CD4-positive, alpha-beta T cell (primary cell): ENCODE measurements at regions of chr15 and their contacts with region 1.

Region 1: DNA sequence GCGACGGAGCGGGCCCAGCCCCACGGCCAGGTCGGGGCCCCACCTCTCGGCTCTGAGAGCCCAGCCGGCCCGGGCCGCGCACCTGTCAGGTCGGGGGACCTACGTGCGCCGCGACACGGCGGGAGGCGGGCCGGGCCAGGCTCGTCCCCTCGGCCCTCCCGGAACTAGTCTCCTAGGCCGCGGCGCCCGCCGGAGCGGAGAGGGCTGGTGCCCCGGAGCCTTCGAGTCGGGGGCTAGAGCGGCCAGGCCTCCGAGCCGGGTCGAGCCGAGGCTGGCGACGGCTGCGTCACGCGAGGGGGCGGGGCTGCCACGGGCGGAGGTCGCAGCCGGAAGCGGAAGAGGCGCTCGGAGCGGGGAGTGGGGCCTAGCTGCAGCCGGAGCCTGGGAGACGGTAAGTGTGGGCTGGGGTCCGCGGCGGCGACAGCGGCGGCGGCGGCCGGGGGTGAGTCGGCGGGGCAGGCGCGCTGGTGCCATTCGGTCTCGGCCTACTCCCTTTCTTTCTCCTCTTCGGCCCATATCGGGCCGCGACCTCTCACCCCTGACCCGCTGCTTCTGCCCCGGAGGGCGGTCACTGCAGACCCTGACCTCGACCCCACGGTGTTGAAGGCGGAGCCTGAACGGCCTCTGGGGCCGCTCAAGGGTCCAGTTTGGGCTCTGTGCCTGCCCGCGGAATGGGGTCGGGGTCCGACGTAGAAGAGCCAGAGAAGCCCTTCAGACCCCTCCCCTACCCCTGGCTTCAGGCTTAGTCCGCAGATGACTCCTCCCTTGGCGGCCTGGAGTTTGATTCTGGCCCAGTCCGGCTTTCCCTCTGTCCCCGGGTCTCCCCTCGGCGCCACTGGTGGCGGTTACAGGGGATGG is at the start of gene CLK3:
- DNase-seq: peak; percentile 92 to 99 (median 97)
- ATAC-seq: peak; percentile 70
- H3K4me3 ChIP-seq: peak within 1 kb of the TSS; percentile 100
- H3K4me3 Mint-ChIP-seq: peak within 1 kb of the TSS; percentile 94
- H3K27ac ChIP-seq: peak within 1 kb of the TSS; percentile 95 to 98
- H3K27ac Mint-ChIP-seq: peak within 1 kb of the TSS; percentile 99
- H3K4me1 ChIP-seq: peaks cover 63% of the 10 kb centered on the region
- H3K4me1 Mint-ChIP-seq: peaks cover 42% of the 10 kb centered on the region
- H3K27me3 ChIP-seq: no peaks in the 10 kb centered on the region
- H3K27me3 Mint-ChIP-seq: no peaks in the 10 kb centered on the region
- CTCF ChIP-seq: no peak
- total RNA-seq, gene CLK3: 275 to 293 TPM

Region 2: DNA sequence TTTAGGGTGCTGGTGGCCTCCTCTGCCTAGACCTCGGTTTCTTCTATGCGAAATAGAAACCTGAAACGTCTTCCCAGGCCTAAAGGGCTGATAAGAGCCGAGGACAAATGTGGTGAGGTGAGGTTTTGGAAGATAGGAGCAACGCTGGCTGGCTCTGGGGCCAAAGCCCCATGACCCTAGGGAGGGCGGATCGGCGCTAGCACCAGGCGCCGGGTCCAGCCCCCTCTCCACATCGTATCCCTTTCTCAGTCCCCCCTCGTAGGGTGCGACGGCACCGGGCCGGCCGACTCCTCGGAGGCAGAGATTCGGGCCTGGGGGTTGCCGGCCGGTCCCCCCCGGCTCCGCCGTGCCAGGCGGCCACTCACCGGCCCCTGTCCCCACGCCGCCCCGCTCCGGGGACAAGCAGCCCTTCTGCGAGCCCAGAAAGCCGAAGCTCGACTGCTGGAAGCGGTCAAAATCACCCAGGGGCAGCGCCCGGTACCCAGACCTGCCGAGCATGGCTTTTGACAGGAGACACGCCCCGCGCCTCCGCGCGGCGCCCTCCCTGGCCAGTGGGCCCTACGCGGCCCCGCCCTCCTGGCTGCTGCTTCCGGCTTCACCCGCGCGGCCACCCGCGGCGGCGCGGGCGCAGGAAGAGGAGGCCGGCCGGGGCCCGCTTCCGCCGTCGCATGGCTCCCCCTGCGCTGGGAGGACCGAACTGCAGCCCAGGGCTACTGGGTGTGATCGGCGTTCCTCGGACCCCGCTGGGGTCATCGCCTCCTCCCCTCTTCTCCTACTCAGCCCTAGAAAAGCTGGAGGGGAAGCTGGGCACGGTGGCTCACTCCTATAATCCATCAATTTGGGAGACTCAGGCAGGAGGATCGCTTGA is 623.8 kb before region 1 on chr15 and contains the start of gene STOML1:
- CTCF ChIA-PET with region 1: no interaction called
- POLR2A ChIA-PET with region 1: interaction called, 7 read pairs
- intact Hi-C with region 1: loop called (anchors 5 to 10 kb)
- DNase-seq: peak; percentile 85 to 98 (median 94)
- ATAC-seq: peak; percentile 74
- H3K4me3 ChIP-seq: peak within 1 kb of the TSS; percentile 71
- H3K4me3 Mint-ChIP-seq: peak within 1 kb of the TSS; percentile 82
- H3K27ac ChIP-seq: peak within 1 kb of the TSS in 1 of 2 donors; percentile 47
- H3K27ac Mint-ChIP-seq: peak within 1 kb of the TSS; percentile 85
- H3K4me1 ChIP-seq: peaks cover 48% of the 10 kb centered on the region
- H3K4me1 Mint-ChIP-seq: peaks cover 51% of the 10 kb centered on the region
- H3K27me3 ChIP-seq: no peaks in the 10 kb centered on the region
- H3K27me3 Mint-ChIP-seq: no peaks in the 10 kb centered on the region
- CTCF ChIP-seq: peak; percentile 83
- total RNA-seq, gene STOML1: 4.6 to 5.3 TPM

Region 3: GRCh38 chr15:74422650-74423430 is 192.9 kb before region 1 on chr15:
- CTCF ChIA-PET with region 1: no interaction called
- POLR2A ChIA-PET with region 1: no interaction called
- intact Hi-C with region 1: no loop called
- DNase-seq: no peak
- ATAC-seq: no peak
- H3K4me3 ChIP-seq: no peak overlapping the region
- H3K4me3 Mint-ChIP-seq: no peak overlapping the region
- H3K27ac ChIP-seq: no peak overlapping the region
- H3K27ac Mint-ChIP-seq: no peak overlapping the region
- H3K4me1 ChIP-seq: no peaks in the 10 kb centered on the region
- H3K4me1 Mint-ChIP-seq: no peaks in the 10 kb centered on the region
- H3K27me3 ChIP-seq: no peaks in the 10 kb centered on the region
- H3K27me3 Mint-ChIP-seq: no peaks in the 10 kb centered on the region
- CTCF ChIP-seq: no peak

Region 4: DNA sequence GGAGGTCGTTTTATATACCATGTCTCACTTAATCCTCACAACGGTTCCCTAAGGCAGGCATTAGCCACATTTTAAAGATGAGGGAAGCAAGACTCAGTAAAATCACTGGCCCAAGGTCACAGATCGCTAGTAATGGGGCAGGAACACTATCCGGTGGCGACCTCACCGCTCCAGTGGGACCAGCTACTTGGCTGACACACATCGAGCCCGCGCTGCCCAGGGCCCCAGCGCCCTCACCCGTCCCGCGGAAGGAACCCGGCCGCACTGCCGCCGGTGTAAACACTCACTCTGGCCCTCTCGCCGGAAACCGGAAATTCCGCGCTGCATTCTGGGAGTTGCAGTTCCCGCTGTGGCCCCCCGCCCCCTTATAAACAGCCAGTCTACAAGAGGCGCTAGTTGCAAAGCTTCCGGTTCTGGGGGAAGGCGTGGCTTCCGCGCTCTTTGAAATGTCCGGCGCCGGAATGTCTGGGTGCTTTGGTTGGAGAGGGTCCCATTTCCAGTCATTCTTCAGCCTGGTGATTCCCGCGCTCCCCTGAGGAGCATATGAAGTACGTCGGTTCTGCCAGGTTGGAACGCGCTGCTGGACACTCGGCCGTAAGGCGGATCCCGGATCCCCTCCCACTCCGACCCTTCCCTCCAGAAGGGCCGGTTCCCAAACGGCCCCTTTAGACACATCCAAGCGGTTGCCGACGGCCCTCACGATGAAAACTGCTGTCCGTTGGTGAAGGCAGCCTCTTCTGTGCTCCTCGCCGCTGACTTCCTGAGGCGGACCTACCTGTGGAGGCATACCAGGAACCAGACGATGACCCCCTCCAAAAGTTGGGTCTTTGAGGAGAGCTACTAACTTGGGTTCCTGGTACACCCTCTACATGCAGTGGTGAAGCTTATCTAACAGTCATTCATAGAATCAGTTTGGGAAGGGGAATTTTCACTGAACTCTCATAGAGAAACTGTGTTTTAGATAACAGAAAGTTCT is 154.6 kb before region 1 on chr15 and contains the start of gene UBL7:
- CTCF ChIA-PET with region 1: no interaction called
- POLR2A ChIA-PET with region 1: interaction called, 3 read pairs
- intact Hi-C with region 1: loop called in 1 of 2 experiments (anchors 2 kb)
- DNase-seq: peak; percentile 91 to 97 (median 96)
- ATAC-seq: peak; percentile 98
- H3K4me3 ChIP-seq: peak within 1 kb of the TSS; percentile 92
- H3K4me3 Mint-ChIP-seq: peak within 1 kb of the TSS; percentile 97
- H3K27ac ChIP-seq: peak within 1 kb of the TSS; percentile 61 to 62
- H3K27ac Mint-ChIP-seq: peak within 1 kb of the TSS; percentile 84
- H3K4me1 ChIP-seq: peaks cover 19% of the 10 kb centered on the region
- H3K4me1 Mint-ChIP-seq: peaks cover 53% of the 10 kb centered on the region
- H3K27me3 ChIP-seq: no peaks in the 10 kb centered on the region
- H3K27me3 Mint-ChIP-seq: no peaks in the 10 kb centered on the region
- CTCF ChIP-seq: peak; percentile 15
- total RNA-seq, gene UBL7: 14.3 to 17.1 TPM

Region 5: GRCh38 chr15:74598126-74598842 is 17.5 kb before region 1 on chr15:
- CTCF ChIA-PET with region 1: interaction called, 3 read pairs
- POLR2A ChIA-PET with region 1: interaction called, 44 read pairs
- intact Hi-C with region 1: loop called in 1 of 2 experiments (anchors 2 kb)
- DNase-seq: peak; percentile 67 to 91 (median 82)
- ATAC-seq: peak; percentile 97
- H3K4me3 ChIP-seq: peak overlapping the region; percentile 65
- H3K4me3 Mint-ChIP-seq: peak overlapping the region; percentile 99
- H3K27ac ChIP-seq: peak overlapping the region; percentile 66 to 76
- H3K27ac Mint-ChIP-seq: peak overlapping the region; percentile 94
- H3K4me1 ChIP-seq: peaks cover 19% of the 10 kb centered on the region
- H3K4me1 Mint-ChIP-seq: peaks cover 20% of the 10 kb centered on the region
- H3K27me3 ChIP-seq: no peaks in the 10 kb centered on the region
- H3K27me3 Mint-ChIP-seq: no peaks in the 10 kb centered on the region
- CTCF ChIP-seq: no peak

Region 6: DNA sequence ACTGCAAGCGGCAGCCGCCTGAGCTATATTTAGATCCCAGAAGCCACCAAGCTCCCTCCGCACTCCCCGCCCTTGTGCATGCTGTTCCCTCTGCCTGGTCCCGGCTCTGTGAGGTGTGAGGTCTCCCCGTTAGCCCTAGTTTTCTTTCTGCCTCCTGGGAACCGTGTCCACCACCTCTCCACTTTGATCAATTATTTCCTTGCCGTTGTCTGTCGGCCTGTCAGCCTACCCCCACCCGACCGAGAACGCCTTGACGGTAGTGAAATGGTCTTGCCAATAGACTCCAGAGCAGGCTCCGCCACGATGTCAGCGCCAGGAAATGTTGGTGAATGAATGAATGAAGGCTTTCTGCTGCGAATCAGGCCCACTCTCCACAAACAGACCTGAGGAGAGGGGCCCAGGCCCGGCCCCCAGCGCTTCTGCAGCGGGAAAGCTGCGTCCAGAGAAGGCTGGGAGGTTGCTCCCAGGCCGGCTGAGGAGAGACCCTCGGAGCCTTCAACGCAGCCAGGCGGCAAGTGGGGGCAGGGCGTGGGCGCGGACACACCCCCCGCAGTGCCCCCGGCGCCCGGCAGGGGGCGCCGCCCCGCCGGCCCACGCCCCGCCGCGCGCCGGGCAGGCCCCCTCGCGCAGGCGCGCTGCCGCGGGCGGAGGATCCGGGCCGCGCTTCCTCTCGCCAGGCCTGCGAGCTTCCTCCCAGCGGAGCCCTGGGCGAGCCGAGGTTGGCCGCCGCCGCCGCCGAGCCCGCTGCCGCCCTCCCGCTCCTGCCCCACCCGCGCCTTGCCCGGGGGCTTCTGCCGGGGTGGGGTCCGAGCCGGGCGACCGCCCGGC is 165.9 kb after region 1 on chr15 and contains the start of gene CSK:
- CTCF ChIA-PET with region 1: interaction called, 4 read pairs
- POLR2A ChIA-PET with region 1: interaction called, 27 read pairs
- intact Hi-C with region 1: no loop called
- DNase-seq: peak; percentile 59 to 94 (median 80)
- ATAC-seq: peak; percentile 59
- H3K4me3 ChIP-seq: peak within 1 kb of the TSS; percentile 100
- H3K4me3 Mint-ChIP-seq: peak within 1 kb of the TSS; percentile 90
- H3K27ac ChIP-seq: peak within 1 kb of the TSS; percentile 84 to 93
- H3K27ac Mint-ChIP-seq: peak within 1 kb of the TSS; percentile 94
- H3K4me1 ChIP-seq: peaks cover 88% of the 10 kb centered on the region
- H3K4me1 Mint-ChIP-seq: peaks cover 65% of the 10 kb centered on the region
- H3K27me3 ChIP-seq: no peaks in the 10 kb centered on the region
- H3K27me3 Mint-ChIP-seq: no peaks in the 10 kb centered on the region
- CTCF ChIP-seq: peak; percentile 59
- total RNA-seq, gene CSK: 114 to 118 TPM

Region 7: DNA sequence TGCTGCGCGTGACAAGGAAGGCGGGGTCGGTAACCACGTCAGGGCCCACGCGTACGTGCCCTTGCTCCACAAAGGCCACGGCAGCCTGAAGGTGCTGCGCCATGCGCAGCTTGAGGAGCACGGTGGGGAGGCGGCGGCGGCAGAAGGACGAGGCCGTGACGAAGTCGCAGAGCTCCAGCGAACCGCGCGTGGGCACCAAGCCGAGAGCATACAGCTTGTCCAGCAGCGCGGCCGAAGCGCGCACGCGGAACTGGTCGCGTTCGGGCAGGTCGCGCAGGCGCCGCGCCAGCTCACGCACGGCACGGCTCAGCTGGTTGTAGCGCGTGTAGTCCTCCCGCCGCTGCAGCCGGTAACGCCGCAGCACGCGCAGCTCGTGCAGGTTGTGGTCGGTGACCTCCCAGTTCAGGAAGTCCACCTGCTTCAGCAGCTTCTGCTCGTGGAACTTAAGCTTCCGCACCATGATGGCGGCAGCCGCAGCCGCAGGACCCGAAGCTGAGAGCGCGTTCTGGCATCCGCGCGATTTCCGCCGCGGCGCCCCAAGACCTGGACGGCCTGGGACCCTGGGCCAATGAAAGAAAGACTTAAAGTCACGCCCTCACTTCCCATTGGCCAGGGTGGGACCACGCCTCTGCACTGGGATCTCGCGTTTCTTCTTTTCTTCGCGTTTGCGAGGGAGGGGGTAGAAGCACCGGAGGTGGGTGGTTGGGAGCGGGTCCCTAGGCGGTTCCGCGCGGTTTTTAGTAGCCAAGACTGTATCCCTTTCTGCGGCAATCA is 1024.2 kb after region 1 on chr15 and contains the start of gene IMP3:
- CTCF ChIA-PET with region 1: no interaction called
- POLR2A ChIA-PET with region 1: interaction called, 6 read pairs
- intact Hi-C with region 1: loop called in 1 of 2 experiments (anchors 10 kb)
- DNase-seq: peak; percentile 84 to 97 (median 90)
- ATAC-seq: peak; percentile 90
- H3K4me3 ChIP-seq: peak within 1 kb of the TSS; percentile 95
- H3K4me3 Mint-ChIP-seq: peak within 1 kb of the TSS; percentile 89
- H3K27ac ChIP-seq: peak within 1 kb of the TSS; percentile 92
- H3K27ac Mint-ChIP-seq: peak within 1 kb of the TSS; percentile 85
- H3K4me1 ChIP-seq: peaks cover 56% of the 10 kb centered on the region
- H3K4me1 Mint-ChIP-seq: peaks cover 35% of the 10 kb centered on the region
- H3K27me3 ChIP-seq: no peaks in the 10 kb centered on the region
- H3K27me3 Mint-ChIP-seq: no peaks in the 10 kb centered on the region
- CTCF ChIP-seq: no peak
- total RNA-seq, gene IMP3: 48.4 to 50.4 TPM